A673 (cell line): ENCODE measurements at regions of chr1 and their contacts with region 1.

Region 1: GRCh38 chr1:74197657-74198552 is at the starts of genes FPGT and LRRIQ3:
- DNase-seq: peak; percentile 96
- H3K4me3 ChIP-seq: peak within 1 kb of the TSS; percentile 62
- H3K27ac ChIP-seq: peak within 1 kb of the TSS; percentile 72
- H3K4me1 ChIP-seq: no peaks in the 10 kb centered on the region
- H3K27me3 ChIP-seq: no peaks in the 10 kb centered on the region
- CTCF ChIP-seq: no peak
- total RNA-seq, gene FPGT: 6.9 and 7.4 TPM in 2 replicates
- total RNA-seq, gene LRRIQ3: 0.17 and 0.33 TPM in 2 replicates

Region 2: GRCh38 chr1:72286401-72286800 is 1911.5 kb before region 1 on chr1:
- CTCF ChIA-PET with region 1: no interaction called
- POLR2A ChIA-PET with region 1: interaction called, 11 read pairs
- intact Hi-C with region 1: no loop called
- DNase-seq: peak; percentile 12
- H3K4me3 ChIP-seq: no peak overlapping the region
- H3K27ac ChIP-seq: no peak overlapping the region
- H3K4me1 ChIP-seq: peaks cover 15% of the 10 kb centered on the region
- H3K27me3 ChIP-seq: no peaks in the 10 kb centered on the region
- CTCF ChIP-seq: no peak